Activated T-helper 2 cell treated with anti-CD3 and anti-CD28 coated beads, Interferon-gamma antibody, Interleukin-2, Interleukin-4, amounts not matched to agents 10 μg/mL and 5 μg/mL and 100 μg/mL, durations not matched to agents 14 hours and 24 hours and 36 hours (primary cell): ENCODE measurements at regions of chr13 and their contacts with region 1.

Region 1: GRCh38 chr13:57624565-57625435 is 6.7 kb upstream of the PCDH17 start:
- DNase-seq: no peak
- H3K4me3 Mint-ChIP-seq: no peak overlapping the region
- H3K27ac Mint-ChIP-seq: no peak overlapping the region
- H3K4me1 Mint-ChIP-seq: peaks cover 4% of the 10 kb centered on the region
- H3K27me3 Mint-ChIP-seq: peaks cover 18% of the 10 kb centered on the region

Region 2: DNA sequence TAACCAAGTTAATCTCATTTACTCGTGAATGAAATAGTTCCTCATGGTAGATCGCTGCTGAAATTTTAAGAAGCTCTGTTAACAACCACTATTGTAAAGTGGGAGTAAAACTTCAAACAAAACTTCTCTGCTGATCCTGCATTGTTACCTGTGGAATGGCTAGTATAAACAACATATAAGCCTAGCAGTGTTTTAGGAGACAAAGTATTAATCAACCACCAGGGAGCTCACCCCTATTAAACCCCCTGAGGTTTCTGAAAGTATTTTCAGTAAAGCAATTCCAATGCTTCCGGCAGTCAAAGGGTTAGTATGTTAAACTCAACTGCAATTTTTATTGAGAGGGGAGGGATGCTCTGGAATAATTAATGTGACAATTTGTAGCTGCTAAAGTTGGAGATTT is 23.3 kb before region 1 on chr13:
- intact Hi-C with region 1: no loop called
- DNase-seq: no peak
- H3K4me3 Mint-ChIP-seq: no peak overlapping the region
- H3K27ac Mint-ChIP-seq: no peak overlapping the region
- H3K4me1 Mint-ChIP-seq: no peaks in the 10 kb centered on the region
- H3K27me3 Mint-ChIP-seq: no peaks in the 10 kb centered on the region

Region 3: DNA sequence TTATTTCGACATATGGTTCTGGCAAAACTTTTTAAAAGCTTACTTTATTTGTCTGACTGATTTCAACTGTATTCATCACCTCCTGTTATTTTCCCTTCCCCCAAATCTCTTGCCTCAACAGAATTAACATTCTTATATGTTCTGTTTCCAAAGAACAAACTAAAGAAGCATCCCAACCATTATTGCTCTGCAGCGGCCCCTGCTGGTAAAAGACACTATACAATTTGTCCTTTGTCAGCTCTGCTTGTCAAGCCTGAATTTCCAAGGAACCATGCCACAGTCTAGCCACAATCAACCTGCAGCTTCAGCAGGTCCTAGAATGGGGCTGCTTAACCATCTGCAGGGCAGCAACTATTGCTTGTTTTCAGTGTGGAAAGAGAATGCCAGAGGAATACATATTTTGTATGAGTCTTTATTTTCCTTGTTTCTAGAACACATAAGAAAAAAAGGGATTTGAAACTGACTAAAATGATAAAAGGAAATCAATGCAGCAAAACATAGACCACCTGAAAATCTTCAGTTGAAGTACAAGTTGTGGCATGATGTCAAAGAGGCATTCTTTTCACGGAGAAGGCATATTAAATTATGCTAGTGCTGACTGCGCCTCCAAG is 1693.6 kb after region 1 on chr13:
- intact Hi-C with region 1: loop called (anchors 10 kb)
- DNase-seq: peak; percentile 22
- H3K4me3 Mint-ChIP-seq: no peak overlapping the region
- H3K27ac Mint-ChIP-seq: no peak overlapping the region
- H3K4me1 Mint-ChIP-seq: no peaks in the 10 kb centered on the region
- H3K27me3 Mint-ChIP-seq: no peaks in the 10 kb centered on the region